CD4-positive, alpha-beta T cell (primary cell): ENCODE measurements at regions of chr12 and their contacts with region 1.

Region 1: DNA sequence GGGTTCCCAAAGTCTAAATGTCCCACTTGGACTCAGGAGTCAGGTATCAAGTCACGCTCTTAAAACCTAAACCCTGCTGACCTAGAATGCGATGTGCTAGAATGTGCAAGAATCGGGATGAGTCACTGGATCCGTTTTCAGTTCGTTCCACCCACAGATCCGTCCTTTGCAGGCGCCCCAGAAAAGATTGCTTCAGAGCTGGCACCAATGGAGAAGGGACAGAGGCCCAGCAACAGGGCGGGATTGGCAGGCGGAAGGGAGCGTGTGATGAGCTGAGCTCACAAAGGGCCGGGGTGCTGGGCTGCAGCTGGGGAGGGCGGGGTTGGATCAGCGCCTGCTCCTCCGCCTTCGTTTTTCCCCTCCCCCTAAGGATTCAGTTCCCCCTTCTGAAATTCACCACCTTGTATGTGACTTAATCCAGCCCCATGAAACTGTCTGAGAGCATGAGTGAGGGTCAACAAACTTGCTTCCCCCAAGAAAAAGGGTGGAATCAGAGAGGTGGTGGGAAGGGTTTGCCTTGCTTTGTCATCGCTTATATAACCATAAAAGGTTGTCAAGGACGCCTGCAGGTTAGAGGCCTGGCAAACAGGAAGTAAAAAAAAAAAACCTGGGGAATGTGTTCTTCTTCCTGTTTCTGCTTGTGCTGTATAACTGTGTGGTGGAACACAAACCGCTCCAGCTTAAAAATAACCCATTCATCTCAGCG is 2.8 kb upstream of the UBC start:
- DNase-seq: peak; percentile 82 to 98 (median 88)
- ATAC-seq: peak; percentile 78
- H3K4me3 ChIP-seq: peak overlapping the region; percentile 54
- H3K4me3 Mint-ChIP-seq: peak overlapping the region; percentile 86
- H3K27ac ChIP-seq: peak overlapping the region; percentile 84 to 97
- H3K27ac Mint-ChIP-seq: peak overlapping the region; percentile 99
- H3K4me1 ChIP-seq: peaks cover 78% of the 10 kb centered on the region
- H3K4me1 Mint-ChIP-seq: peaks cover 89% of the 10 kb centered on the region
- H3K27me3 ChIP-seq: no peaks in the 10 kb centered on the region
- H3K27me3 Mint-ChIP-seq: peaks cover 17% of the 10 kb centered on the region
- CTCF ChIP-seq: no peak

Region 2: GRCh38 chr12:124927201-124928094 is 10.2 kb after region 1 on chr12:
- CTCF ChIA-PET with region 1: interaction called, 5 read pairs
- POLR2A ChIA-PET with region 1: interaction called, 87 read pairs
- intact Hi-C with region 1: loop called in 1 of 2 experiments (anchors 1 kb)
- DNase-seq: peak; percentile 81 to 95 (median 92)
- ATAC-seq: peak; percentile 90
- H3K4me3 ChIP-seq: peak overlapping the region; percentile 69
- H3K4me3 Mint-ChIP-seq: peak overlapping the region; percentile 95
- H3K27ac ChIP-seq: peak overlapping the region; percentile 66 to 67
- H3K27ac Mint-ChIP-seq: peak overlapping the region; percentile 98
- H3K4me1 ChIP-seq: peaks cover 24% of the 10 kb centered on the region
- H3K4me1 Mint-ChIP-seq: peaks cover 24% of the 10 kb centered on the region
- H3K27me3 ChIP-seq: no peaks in the 10 kb centered on the region
- H3K27me3 Mint-ChIP-seq: peaks cover 11% of the 10 kb centered on the region
- CTCF ChIP-seq: no peak

Region 3: DNA sequence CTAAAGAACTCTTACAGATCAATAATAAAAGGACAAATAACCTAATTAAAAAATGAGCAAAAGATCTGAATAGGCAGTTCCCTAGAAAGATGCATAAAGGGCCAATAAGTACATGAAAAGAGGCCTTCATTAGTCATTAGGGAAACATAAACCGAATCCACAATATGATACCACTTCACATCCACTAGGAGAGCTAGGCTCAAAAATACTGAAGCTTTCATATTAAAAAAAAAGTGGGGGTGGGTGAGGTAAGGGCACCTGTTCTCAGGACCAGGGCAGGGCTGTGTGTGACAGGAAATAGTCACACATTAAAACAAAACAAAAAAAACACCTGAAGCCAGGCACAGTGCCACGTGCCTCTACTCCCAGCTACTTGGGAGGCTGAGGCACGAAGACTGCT is 44.4 kb after region 1 on chr12:
- CTCF ChIA-PET with region 1: no interaction called
- POLR2A ChIA-PET with region 1: no interaction called
- intact Hi-C with region 1: no loop called
- DNase-seq: no peak
- ATAC-seq: no peak
- H3K4me3 ChIP-seq: no peak overlapping the region
- H3K4me3 Mint-ChIP-seq: no peak overlapping the region
- H3K27ac ChIP-seq: no peak overlapping the region
- H3K27ac Mint-ChIP-seq: no peak overlapping the region
- H3K4me1 ChIP-seq: no peaks in the 10 kb centered on the region
- H3K4me1 Mint-ChIP-seq: no peaks in the 10 kb centered on the region
- H3K27me3 ChIP-seq: no peaks in the 10 kb centered on the region
- H3K27me3 Mint-ChIP-seq: no peaks in the 10 kb centered on the region
- CTCF ChIP-seq: no peak

Region 4: GRCh38 chr12:125114365-125115141 is 197.3 kb after region 1 on chr12:
- CTCF ChIA-PET with region 1: no interaction called
- POLR2A ChIA-PET with region 1: no interaction called
- intact Hi-C with region 1: no loop called
- DNase-seq: no peak
- ATAC-seq: no peak
- H3K4me3 ChIP-seq: no peak overlapping the region
- H3K4me3 Mint-ChIP-seq: no peak overlapping the region
- H3K27ac ChIP-seq: no peak overlapping the region
- H3K27ac Mint-ChIP-seq: no peak overlapping the region
- H3K4me1 ChIP-seq: no peaks in the 10 kb centered on the region
- H3K4me1 Mint-ChIP-seq: no peaks in the 10 kb centered on the region
- H3K27me3 ChIP-seq: no peaks in the 10 kb centered on the region
- H3K27me3 Mint-ChIP-seq: no peaks in the 10 kb centered on the region
- CTCF ChIP-seq: no peak